ENCODE measurements at regions of chr10 and their contacts with region 1.

Region 1: DNA sequence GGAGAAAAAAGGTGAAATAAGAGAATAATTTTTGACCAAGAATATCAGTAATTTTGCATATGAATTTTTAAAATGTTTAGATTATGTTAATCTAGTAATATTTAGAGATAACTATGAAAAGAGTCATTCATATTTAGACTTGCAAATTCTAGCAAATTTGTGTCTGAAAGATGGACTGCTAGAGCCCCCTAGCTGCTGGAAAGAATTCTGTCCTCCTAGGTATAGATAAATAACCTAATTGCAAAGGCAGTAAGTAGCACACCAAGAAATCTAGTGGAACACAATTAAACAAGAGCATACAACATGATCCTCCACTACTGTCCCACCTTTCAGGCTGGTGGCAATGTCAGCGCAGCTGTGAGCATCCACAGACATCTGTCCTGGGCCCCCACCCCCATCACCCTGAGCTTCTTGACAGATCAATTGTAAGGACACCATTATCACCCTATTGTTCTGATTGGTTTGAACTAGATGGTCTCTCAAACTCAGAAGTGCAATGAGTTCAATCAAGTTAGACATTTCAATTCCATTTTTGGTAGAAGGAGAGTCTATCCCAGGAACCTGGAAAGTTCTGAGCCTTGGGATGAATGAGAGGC is 15.0 kb upstream of the GFRA1 start:
- DNase-seq: peak in 3 of 5 donors; percentile 14 to 37 (median 25)
- ATAC-seq: peak in 1 of 4 donors; percentile 61
- H3K4me3 ChIP-seq: no peak overlapping the region
- H3K27ac ChIP-seq: no peak overlapping the region
- H3K4me1 ChIP-seq: no peaks in the 10 kb centered on the region
- H3K27me3 ChIP-seq: peaks cover 0 to 21% (median 0%) of the 10 kb centered on the region in 9 donors
- CTCF ChIP-seq: peak; percentile 44 to 77 (median 64)
- POLR2A ChIP-seq: no peak

Region 2: GRCh38 chr10:115141254-115141653 is 1146.8 kb before region 1 on chr10:
- intact Hi-C with region 1: loop called in 1 of 10 experiments (anchors 10 kb)
- DNase-seq: no peak
- ATAC-seq: no peak
- H3K4me3 ChIP-seq: no peak overlapping the region
- H3K27ac ChIP-seq: no peak overlapping the region
- H3K4me1 ChIP-seq: no peaks in the 10 kb centered on the region
- H3K27me3 ChIP-seq: no peaks in the 10 kb centered on the region
- CTCF ChIP-seq: peak in 7 of 12 donors; percentile 10 to 44 (median 26)
- POLR2A ChIP-seq: no peak

Region 3: GRCh38 chr10:115432188-115432775 is 855.7 kb before region 1 on chr10:
- intact Hi-C with region 1: loop called in 1 of 10 experiments (anchors 5 kb)
- DNase-seq: no peak
- ATAC-seq: no peak
- H3K4me3 ChIP-seq: no peak overlapping the region
- H3K27ac ChIP-seq: no peak overlapping the region
- H3K4me1 ChIP-seq: no peaks in the 10 kb centered on the region
- H3K27me3 ChIP-seq: no peaks in the 10 kb centered on the region
- CTCF ChIP-seq: peak in 6 of 12 donors; percentile 20 to 40 (median 32)
- POLR2A ChIP-seq: no peak

Region 4: DNA sequence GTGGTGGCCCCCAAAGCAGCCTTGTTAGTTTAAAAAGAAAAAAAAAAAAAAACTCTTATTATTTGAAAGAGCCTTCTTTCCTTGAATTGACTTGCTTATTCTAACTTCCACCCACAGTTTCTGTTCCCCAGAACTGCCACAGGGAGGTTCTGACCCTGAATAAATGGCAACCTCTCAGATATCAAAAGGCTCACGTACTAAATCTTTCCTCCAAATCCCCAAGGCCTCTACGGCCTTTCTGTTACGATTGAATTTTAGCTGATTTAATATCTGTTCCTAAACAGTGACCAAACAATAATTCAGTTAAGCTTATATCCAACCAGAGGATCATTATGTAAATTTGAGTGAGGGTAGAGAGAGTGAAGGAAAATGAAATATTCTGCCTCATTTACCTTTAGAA is 497.8 kb before region 1 on chr10:
- intact Hi-C with region 1: loop called in 4 of 10 experiments (anchors 5 to 10 kb)
- DNase-seq: no peak
- ATAC-seq: no peak
- H3K4me3 ChIP-seq: no peak overlapping the region
- H3K27ac ChIP-seq: no peak overlapping the region
- H3K4me1 ChIP-seq: no peaks in the 10 kb centered on the region
- H3K27me3 ChIP-seq: peaks cover 0 to 3% (median 0%) of the 10 kb centered on the region in 9 donors
- CTCF ChIP-seq: no peak
- POLR2A ChIP-seq: no peak

Region 5: GRCh38 chr10:115801992-115802391 is 486.0 kb before region 1 on chr10:
- intact Hi-C with region 1: loop called in 8 of 10 experiments (anchors 2 to 10 kb)
- DNase-seq: no peak
- ATAC-seq: no peak
- H3K4me3 ChIP-seq: no peak overlapping the region
- H3K27ac ChIP-seq: no peak overlapping the region
- H3K4me1 ChIP-seq: no peaks in the 10 kb centered on the region
- H3K27me3 ChIP-seq: no peaks in the 10 kb centered on the region
- CTCF ChIP-seq: no peak
- POLR2A ChIP-seq: no peak

Region 6: DNA sequence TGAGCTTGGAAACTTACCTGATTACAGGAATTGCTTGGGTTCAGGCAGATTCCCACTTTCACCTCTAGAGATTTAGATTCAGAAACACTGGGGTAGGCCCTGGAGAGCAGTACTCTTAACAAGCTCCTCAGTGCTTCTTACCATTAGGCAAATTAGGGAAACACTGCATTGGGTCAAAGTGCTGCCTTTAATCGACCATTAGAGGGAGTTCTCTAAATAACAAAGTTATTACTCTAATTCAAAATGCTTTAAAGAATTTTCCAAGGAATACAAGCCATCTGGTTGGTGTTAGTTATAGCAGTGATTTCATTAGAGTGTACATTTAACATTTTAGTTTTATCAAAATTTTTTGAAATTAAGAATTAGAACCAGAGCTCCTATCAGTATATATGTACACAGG is 339.5 kb before region 1 on chr10:
- intact Hi-C with region 1: loop called in 6 of 10 experiments (anchors 5 to 10 kb)
- DNase-seq: no peak
- ATAC-seq: peak in 1 of 4 donors; percentile 9
- H3K4me3 ChIP-seq: no peak overlapping the region
- H3K27ac ChIP-seq: no peak overlapping the region
- H3K4me1 ChIP-seq: peaks cover 0 to 13% (median 0%) of the 10 kb centered on the region in 12 donors
- H3K27me3 ChIP-seq: no peaks in the 10 kb centered on the region
- CTCF ChIP-seq: peak in 11 of 12 donors; percentile 11 to 58 (median 38)
- POLR2A ChIP-seq: no peak